Left ventricle myocardium superior (tissue), 1 donor: ENCODE measurements at regions of chr11 and their contacts with region 1.

Region 1: GRCh38 chr11:63478896-63479295 is 12.1 kb downstream of the PLAAT5 start:
- DNase-seq: no peak
- ATAC-seq: peak; percentile 85

Region 2: DNA sequence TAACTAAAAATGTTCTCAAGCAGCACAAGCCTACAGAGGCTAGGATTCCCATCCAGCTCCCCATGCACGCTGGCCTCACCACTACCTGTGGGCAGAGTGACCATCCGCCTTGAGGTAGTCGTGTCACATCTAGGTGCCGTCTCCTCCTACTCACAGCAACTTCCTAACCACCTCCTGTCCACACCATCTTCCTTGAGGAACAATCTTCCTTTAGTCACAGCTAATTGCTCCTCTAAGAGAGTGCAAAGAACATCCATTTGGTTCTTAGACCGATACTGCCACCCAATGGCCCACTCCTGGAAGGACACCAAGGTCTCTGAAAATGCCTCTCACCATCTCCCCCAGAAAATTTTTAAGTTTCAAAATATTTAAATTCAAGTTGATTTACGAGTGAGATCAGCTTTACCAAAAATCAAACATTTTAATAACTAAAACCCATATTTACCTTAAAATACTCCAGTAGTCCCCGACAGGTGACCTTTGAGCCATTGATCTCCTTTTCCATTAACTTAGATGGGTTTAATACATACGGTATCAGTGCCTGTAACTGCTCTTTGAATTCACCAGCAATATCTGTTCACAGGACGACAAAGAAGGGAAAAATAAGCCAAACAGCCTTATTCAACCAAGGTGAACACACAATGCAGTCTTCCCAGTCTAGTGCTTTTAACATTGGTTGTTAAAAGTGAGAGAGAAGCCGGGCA is 157.0 kb after region 1 on chr11:
- intact Hi-C with region 1: loop called (anchors 2 kb)
- DNase-seq: peak; percentile 47
- ATAC-seq: peak; percentile 75

Region 3: DNA sequence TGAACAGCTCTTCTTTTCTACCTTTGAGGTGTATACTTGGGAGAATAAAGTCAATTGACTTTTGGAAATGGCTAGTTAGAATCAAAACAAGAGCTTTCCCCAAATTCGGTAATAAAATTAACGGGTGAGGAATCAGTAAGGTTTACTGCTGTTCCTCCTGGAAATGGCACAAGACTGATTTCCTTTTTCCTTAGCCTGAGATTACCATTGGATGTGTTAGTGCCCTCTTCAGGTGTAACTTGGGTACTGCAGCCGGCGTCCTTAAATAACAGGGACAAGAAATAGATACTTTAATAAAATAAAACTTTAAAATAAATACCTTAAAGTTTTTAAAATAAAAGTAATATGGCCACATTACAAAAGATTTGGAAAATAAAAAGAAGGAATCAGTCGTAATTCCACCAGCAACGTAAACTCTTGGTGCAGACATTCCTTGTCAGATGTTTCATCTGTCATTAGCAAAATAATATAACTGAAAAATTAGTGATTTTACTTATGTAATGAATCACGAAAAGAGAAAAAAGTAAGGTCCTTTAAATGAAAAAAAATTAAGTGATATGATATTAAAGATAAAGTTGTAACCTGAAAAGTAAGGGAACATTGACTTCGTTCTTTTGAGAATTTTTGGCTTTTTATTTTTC is 259.9 kb after region 1 on chr11:
- intact Hi-C with region 1: loop called (anchors 5 kb)
- DNase-seq: peak; percentile 68
- ATAC-seq: peak; percentile 55

Region 4: DNA sequence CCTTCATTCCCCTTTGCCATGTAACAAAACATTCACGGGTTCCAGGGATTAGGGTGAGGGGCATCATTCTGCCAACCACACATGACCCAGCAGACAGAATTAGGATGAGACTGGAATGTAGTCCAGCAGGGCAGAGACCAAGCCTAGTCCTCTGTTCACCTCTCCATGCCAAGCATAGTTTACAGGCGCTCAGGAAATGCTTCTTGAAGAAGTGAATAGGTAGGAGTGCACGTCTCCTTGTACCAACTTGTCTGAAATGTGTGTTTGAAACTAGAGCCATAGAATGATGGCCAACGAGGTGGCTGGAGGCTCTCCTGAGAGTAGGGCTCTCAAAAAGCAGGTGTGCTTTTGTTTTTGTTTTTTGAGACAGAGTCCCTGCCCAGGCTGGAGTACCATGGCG is 342.5 kb after region 1 on chr11:
- intact Hi-C with region 1: no loop called
- DNase-seq: no peak
- ATAC-seq: no peak